ENCODE measurements at regions of chr10 and their contacts with region 1.

Region 1: DNA sequence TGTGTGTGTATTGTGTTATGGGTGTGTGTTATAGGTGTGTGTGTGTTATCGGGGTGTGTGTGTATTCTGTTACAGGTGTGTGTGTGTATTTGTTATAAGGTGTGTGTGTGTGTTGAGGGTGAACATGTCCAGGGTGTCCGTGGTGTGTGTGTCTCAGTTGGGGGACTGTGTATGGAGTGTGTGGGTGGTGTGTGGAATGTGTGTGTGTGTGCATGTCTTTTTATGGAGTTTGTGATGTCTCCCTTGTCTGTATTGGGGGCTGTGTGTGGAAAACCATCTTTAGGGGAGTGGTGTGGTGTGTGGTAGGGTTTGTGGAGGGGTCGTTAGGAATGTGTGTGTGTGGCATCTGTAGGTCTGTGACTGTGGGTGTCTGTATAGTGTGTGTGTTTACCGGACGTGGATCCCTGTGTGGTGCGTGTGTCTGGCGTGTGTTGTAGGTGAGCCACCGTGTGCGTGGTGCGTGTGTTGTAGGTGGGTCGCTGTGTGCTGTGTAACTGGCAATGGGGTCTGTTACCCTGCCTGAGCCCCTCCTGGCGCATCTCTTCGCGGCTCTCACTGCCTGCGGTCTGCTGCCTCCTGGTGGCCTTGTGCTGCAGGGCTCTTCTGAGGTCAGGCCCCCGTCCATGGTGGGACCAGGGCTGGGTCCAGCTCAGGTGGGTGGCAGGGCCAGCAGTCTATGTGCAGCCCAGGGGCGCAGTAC is 61.7 kb downstream of the PALD1 start:
- DNase-seq: peak in 1 of 3 donors; percentile 76
- ATAC-seq: peak; percentile 25 to 34
- H3K4me3 ChIP-seq: no peak overlapping the region
- H3K27ac ChIP-seq: no peak overlapping the region
- H3K4me1 ChIP-seq: no peaks in the 10 kb centered on the region
- H3K27me3 ChIP-seq: no peaks in the 10 kb centered on the region

Region 2: DNA sequence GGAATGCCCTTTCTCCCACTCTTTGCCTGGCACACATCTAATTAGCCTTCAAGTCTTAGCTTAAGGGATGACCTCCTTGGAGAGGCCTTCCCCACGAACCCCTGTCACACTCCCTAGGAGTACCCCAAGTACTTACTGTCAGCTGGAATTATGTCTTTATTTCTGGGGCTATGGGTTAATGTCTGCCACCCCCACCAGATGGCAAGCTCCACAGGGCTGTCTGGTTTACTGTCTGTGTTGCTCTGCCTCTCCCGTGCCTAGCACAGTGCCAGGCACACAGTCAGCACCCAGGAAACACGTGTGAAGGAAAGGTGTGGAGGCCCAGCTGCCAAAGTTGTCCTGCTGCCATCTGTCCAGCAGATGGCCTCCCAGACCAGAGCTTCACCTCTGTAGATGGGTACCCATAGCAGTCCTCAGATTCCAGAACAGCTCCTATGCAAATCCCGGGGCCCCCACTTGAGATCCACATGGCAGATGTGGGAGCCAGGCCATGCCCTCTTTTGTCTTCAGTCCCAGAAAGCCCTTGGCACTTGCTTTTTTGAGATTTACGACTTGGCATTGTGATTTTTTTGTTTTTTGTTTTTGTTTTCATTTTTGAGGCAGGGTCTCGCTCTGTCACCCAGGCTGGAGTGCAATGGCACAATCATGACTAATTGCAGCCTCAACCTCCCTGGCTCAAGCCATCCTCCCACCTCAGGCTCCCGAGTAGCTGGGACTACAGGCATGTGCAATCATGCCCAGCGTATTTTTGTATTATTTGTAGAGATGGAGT is 78.8 kb before region 1 on chr10:
- intact Hi-C with region 1: loop called (anchors 1 to 5 kb)
- DNase-seq: peak in 2 of 3 donors; percentile 81 to 86
- ATAC-seq: peak; percentile 47 to 59
- H3K4me3 ChIP-seq: no peak overlapping the region
- H3K27ac ChIP-seq: no peak overlapping the region
- H3K4me1 ChIP-seq: peaks cover 7% of the 10 kb centered on the region
- H3K27me3 ChIP-seq: no peaks in the 10 kb centered on the region

Region 3: GRCh38 chr10:70466951-70467350 is 73.3 kb before region 1 on chr10:
- intact Hi-C with region 1: loop called in 3 of 4 experiments (anchors 5 kb)
- DNase-seq: no peak
- ATAC-seq: no peak
- H3K4me3 ChIP-seq: no peak overlapping the region
- H3K27ac ChIP-seq: no peak overlapping the region
- H3K4me1 ChIP-seq: peaks cover 4% of the 10 kb centered on the region
- H3K27me3 ChIP-seq: no peaks in the 10 kb centered on the region